ENCODE measurements at regions of chr1 and their contacts with region 1.

Region 1: GRCh38 chr1:158203693-158204457 is 23.2 kb downstream of the CD1D start:
- DNase-seq: peak in 1 of 2 donors; percentile 81
- H3K4me3 ChIP-seq: no peak overlapping the region
- H3K27ac ChIP-seq: no peak overlapping the region
- H3K4me1 ChIP-seq: peaks cover 0 to 6% (median 1%) of the 10 kb centered on the region in 4 donors
- H3K27me3 ChIP-seq: no peaks in the 10 kb centered on the region
- CTCF ChIP-seq: peak in 5 of 7 experiments; percentile 43 to 79 (median 59)
- EP300 ChIP-seq: no peak
- POLR2A ChIP-seq: no peak

Region 2: GRCh38 chr1:158257888-158258287 is 54.0 kb after region 1 on chr1:
- intact Hi-C with region 1: no loop called
- DNase-seq: no peak
- H3K4me3 ChIP-seq: no peak overlapping the region
- H3K27ac ChIP-seq: no peak overlapping the region
- H3K4me1 ChIP-seq: no peaks in the 10 kb centered on the region
- H3K27me3 ChIP-seq: no peaks in the 10 kb centered on the region
- CTCF ChIP-seq: no peak
- EP300 ChIP-seq: no peak
- POLR2A ChIP-seq: no peak

Region 3: GRCh38 chr1:158998781-158999161 is 794.9 kb after region 1 on chr1:
- intact Hi-C with region 1: loop called (anchors 5 kb)
- DNase-seq: peak in 1 of 2 donors; percentile 85
- H3K4me3 ChIP-seq: peak overlapping the region; percentile 35 to 45 (median 38)
- H3K27ac ChIP-seq: peak overlapping the region in 4 of 5 donors; percentile 79 to 84 (median 82)
- H3K4me1 ChIP-seq: peaks cover 0 to 27% (median 10%) of the 10 kb centered on the region in 4 donors
- H3K27me3 ChIP-seq: peaks cover 0 to 4% (median 0%) of the 10 kb centered on the region in 3 donors
- CTCF ChIP-seq: peak in 5 of 7 experiments; percentile 67 to 94 (median 81)
- EP300 ChIP-seq: no peak
- POLR2A ChIP-seq: no peak

Region 4: GRCh38 chr1:159071970-159072582 is 868.2 kb after region 1 on chr1:
- intact Hi-C with region 1: loop called (anchors 10 kb)
- DNase-seq: peak in 1 of 2 donors; percentile 79
- H3K4me3 ChIP-seq: no peak overlapping the region
- H3K27ac ChIP-seq: no peak overlapping the region
- H3K4me1 ChIP-seq: peaks cover 0 to 8% (median 2%) of the 10 kb centered on the region in 4 donors
- H3K27me3 ChIP-seq: no peaks in the 10 kb centered on the region
- CTCF ChIP-seq: peak in 4 of 7 experiments; percentile 47 to 79 (median 56)
- EP300 ChIP-seq: no peak
- POLR2A ChIP-seq: no peak